ENCODE measurements at regions of chr2 and their contacts with region 1.

Region 1: DNA sequence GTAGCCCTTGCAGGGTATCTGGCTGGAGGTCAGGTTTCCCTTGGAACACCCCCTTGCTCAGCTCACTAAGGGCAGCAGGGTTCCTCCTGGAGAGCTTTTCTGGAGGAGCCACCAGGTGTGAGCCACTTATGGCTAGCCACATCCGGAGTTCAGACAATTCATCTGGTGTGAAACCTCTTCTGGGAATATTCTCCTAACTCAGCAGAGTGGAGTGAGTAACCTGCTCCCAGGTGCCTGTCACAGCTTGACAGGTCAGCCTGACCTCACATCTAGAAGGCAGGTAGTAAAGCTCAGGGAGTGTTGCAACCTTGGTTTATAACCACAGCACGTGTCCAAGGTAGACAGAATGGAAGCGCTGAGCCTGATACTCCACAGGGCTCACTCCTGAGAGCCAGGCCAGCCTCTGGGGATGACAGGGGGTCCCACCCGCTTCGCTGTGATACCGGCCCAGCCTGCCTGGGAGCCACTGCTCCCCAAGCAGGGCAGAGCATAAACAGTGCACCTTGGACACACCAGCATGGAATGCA is 62.6 kb upstream of the TGFA start:
- DNase-seq: no peak
- H3K4me3 ChIP-seq: no peak overlapping the region
- H3K27ac ChIP-seq: no peak overlapping the region
- H3K4me1 ChIP-seq: no peaks in the 10 kb centered on the region
- H3K27me3 ChIP-seq: peaks cover 8 to 11% of the 10 kb centered on the region in 2 experiments
- CTCF ChIP-seq: no peak
- POLR2A ChIP-seq: no peak

Region 2: DNA sequence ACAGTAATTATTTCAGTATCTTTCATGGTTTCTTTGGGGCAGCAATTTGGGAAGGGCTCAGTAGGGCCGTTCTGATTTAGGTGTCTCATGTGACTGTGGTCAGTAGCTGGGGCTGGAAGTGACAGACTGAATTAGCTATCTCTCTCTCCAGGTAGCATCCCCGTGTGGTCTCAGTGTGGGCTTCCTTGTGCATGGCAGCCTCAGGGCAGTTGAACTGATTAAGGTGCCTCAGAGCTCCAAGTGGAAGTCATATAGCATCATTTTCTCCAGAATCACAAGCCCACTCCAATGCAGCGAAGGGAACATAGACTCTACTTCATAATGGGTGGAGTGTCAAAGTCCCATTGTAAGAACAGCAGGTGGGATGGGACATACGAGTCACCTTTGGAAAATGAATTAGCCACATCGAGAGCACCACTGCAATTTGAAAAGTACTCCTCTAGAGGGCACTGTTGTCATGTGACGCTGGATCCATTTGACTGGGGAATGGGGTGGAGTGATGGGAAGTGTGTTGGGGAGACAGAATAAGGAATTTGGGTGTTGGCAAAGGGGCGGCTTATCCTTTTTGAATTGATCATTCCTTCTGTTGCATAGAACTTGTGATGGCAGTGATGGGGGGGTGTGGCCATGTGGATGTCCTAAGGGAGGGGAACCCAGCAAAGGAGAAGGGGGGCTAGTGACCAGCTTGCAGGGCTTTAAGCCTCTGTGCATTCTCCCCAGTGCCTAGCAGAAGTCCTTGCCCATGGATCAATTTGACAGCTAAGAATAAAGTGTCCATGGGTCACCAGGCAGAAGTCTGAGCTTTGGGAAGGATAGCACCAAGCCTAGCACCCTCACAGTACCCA is 275.1 kb before region 1 on chr2:
- CTCF ChIA-PET with region 1: interaction called, 258 read pairs
- POLR2A ChIA-PET with region 1: no interaction called
- dilution Hi-C with region 1: no loop called
- intact Hi-C with region 1: loop called (anchors 1 kb)
- DNase-seq: peak; percentile 55
- H3K4me3 ChIP-seq: no peak overlapping the region
- H3K27ac ChIP-seq: no peak overlapping the region
- H3K4me1 ChIP-seq: no peaks in the 10 kb centered on the region
- H3K27me3 ChIP-seq: no peaks in the 10 kb centered on the region
- CTCF ChIP-seq: peak; percentile 71 to 82
- POLR2A ChIP-seq: no peak

Region 3: DNA sequence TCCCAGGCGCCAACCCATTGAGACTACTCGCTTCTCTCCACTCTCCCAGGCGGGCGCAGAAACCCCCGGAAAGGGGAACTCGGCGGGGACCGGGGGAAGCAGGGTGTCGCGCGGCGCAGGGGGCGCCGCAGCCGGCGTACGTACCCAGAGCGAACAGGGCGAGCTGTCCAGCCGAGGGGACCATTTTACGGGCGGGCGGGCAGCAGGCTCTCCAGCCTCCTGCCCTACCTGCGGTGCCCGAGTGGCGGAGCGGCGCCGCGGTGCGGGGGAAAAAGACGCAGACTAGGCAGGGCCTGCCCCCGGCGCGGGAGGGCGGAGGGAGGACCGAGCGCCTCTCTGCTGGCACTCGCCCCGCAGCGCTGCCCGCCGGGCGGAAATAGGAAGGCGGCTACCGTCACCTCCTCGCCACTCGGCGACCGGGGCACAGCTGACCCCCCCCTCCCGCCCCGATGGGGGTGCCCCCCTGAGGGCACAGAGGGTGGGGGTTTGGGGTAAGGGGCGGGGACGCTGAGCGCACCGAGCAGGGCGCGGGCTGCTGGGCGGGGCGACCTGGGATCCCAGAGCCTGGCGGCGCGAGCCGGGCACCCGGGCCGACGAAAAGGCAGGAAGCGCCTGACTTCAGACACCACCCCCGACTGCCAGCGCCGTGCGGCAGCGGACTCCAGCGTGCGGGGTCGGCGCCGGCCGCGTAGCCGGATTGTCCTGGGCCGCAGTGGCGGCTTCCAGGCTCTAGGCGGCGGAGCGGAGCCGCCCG is 62.5 kb before region 1 on chr2 and contains the start of gene TGFA:
- CTCF ChIA-PET with region 1: interaction called, 41 read pairs
- POLR2A ChIA-PET with region 1: no interaction called
- dilution Hi-C with region 1: no loop called
- intact Hi-C with region 1: loop called (anchors 2 kb)
- DNase-seq: peak; percentile 38
- H3K4me3 ChIP-seq: peak within 1 kb of the TSS; percentile 29 to 45 (median 35)
- H3K27ac ChIP-seq: no peak within 1 kb of the TSS
- H3K4me1 ChIP-seq: peaks cover 9% of the 10 kb centered on the region
- H3K27me3 ChIP-seq: peaks cover 48 to 51% of the 10 kb centered on the region in 2 experiments
- CTCF ChIP-seq: peak; percentile 69 to 91
- POLR2A ChIP-seq: no peak
- total RNA-seq, gene TGFA: 0.12 and 0.22 TPM in 2 replicates

Region 4: GRCh38 chr2:70627211-70627902 is 11.1 kb after region 1 on chr2:
- CTCF ChIA-PET with region 1: interaction called, 39 read pairs
- POLR2A ChIA-PET with region 1: no interaction called
- dilution Hi-C with region 1: no loop called
- intact Hi-C with region 1: no loop called
- DNase-seq: peak; percentile 9
- H3K4me3 ChIP-seq: no peak overlapping the region
- H3K27ac ChIP-seq: no peak overlapping the region
- H3K4me1 ChIP-seq: no peaks in the 10 kb centered on the region
- H3K27me3 ChIP-seq: peaks cover 16 to 22% of the 10 kb centered on the region in 2 experiments
- CTCF ChIP-seq: no peak
- POLR2A ChIP-seq: no peak

Region 5: DNA sequence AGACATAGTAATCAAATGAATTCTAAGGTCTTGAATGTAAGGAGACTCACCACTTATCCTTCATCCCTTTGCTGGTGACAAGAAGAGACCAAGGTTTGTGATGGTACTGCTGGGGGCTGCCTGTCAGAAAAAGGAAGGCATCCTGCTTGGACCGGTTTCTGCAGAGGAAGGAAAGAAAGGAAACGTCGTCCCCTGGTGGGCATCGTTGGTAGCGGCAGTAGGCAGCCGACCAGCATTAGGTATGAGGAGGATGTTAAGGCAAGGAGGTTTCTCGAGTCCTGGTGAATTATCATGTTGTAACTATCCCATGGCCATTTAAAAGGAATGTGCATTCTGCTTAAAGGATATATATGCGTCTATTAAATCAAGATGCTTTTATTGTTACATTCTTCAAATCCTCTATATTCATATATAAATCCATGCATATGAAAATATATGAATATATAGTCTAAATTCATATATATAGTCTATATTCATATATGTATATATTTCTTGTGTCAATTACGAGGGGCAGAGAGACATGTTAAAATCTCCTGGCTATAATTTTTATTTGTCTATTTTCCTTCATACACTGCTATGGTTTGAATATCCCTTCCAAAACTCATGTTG is 31.7 kb after region 1 on chr2:
- CTCF ChIA-PET with region 1: interaction called, 15 read pairs
- POLR2A ChIA-PET with region 1: no interaction called
- dilution Hi-C with region 1: no loop called
- intact Hi-C with region 1: no loop called
- DNase-seq: peak; percentile 77
- H3K4me3 ChIP-seq: no peak overlapping the region
- H3K27ac ChIP-seq: no peak overlapping the region
- H3K4me1 ChIP-seq: no peaks in the 10 kb centered on the region
- H3K27me3 ChIP-seq: peaks cover 0 to 9% of the 10 kb centered on the region in 2 experiments
- CTCF ChIP-seq: peak; percentile 95 to 98
- POLR2A ChIP-seq: no peak

Region 6: DNA sequence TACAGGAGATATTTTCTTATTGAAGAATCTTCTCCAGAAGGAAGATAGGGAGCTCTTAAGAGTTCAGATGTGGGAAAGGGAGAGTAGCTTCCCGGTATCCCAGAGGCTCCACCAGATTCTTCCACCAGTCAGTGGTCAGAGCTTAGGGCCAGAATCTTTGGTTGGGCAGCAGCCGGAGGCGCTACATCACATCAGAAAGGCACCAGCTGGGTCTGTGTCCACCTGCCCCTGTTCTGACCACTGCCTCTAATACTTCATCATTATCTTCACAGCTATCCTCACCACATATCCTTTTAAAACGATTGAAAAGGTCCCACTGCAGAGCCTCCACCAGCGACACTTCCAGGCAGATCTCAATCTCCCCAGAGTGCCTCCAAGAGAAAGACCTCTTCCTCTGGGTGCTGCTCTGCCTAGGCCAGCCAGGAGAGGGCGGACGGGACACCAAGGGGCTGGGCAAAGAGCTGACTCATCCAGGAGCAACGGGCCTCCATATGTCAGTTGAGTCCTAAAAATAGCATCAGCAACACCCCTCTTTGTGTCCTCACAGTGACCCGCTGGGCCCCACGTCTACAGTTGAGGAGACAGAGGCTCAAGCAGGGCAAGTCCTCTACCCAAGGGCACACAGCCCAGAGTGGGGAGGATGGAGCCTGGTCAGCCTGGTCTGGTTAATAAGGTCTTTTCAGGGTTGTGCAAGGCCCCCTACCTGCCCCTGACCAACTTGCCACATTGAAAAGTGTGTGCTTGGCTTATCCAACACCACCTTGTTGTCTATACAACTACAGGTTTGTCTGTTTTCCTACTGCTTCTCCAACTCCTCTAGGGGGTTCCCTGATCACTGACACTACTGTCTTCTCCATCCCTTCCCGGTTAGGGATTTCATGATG is 70.6 kb after region 1 on chr2:
- CTCF ChIA-PET with region 1: no interaction called
- POLR2A ChIA-PET with region 1: no interaction called
- dilution Hi-C with region 1: no loop called
- intact Hi-C with region 1: no loop called
- DNase-seq: no peak
- H3K4me3 ChIP-seq: no peak overlapping the region
- H3K27ac ChIP-seq: no peak overlapping the region
- H3K4me1 ChIP-seq: no peaks in the 10 kb centered on the region
- H3K27me3 ChIP-seq: no peaks in the 10 kb centered on the region
- CTCF ChIP-seq: peak; percentile 6 to 19
- POLR2A ChIP-seq: no peak